WTC11 (cell line): ENCODE measurements at regions of chr5 and their contacts with region 1.

Region 1: DNA sequence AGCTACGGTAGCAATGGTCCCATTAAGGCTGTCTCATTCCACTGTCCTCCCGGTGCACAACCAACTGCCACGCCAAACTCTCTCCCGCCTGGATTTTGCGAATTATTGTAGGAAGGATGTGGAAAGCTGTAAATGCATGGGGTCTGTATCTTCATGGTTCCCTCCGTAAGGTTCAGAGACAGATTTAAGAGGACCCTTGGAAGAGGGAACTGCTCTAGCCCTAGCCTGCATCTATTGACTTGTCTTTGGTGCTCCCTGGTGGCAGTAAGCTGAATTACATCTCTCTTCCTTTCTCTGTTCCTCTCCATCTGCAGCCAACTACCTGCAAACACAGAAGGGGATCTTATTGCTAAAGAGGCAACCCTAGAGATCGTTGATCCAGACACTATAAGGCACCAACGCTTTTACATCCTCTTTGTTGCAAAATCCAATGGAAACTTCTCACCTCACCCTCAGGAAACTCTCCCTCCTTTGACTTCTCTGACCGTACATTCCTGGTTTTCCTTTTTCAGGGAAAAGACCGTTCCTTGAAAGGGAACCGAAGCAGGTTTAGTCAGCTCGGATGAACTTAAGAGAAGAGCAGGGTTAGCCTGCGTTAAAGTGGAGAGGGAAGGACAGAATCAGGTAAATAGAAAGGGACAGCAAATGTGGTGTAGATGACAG is 11.9 kb downstream of the CAPSL start:
- DNase-seq: peak; percentile 58
- ATAC-seq: peak; percentile 85
- H3K4me3 Mint-ChIP-seq: peak overlapping the region; percentile 39
- H3K27ac Mint-ChIP-seq: no peak overlapping the region
- H3K4me1 Mint-ChIP-seq: peaks cover 10% of the 10 kb centered on the region
- H3K27me3 Mint-ChIP-seq: peaks cover 73% of the 10 kb centered on the region
- CTCF ChIP-seq: peak; percentile 93

Region 2: DNA sequence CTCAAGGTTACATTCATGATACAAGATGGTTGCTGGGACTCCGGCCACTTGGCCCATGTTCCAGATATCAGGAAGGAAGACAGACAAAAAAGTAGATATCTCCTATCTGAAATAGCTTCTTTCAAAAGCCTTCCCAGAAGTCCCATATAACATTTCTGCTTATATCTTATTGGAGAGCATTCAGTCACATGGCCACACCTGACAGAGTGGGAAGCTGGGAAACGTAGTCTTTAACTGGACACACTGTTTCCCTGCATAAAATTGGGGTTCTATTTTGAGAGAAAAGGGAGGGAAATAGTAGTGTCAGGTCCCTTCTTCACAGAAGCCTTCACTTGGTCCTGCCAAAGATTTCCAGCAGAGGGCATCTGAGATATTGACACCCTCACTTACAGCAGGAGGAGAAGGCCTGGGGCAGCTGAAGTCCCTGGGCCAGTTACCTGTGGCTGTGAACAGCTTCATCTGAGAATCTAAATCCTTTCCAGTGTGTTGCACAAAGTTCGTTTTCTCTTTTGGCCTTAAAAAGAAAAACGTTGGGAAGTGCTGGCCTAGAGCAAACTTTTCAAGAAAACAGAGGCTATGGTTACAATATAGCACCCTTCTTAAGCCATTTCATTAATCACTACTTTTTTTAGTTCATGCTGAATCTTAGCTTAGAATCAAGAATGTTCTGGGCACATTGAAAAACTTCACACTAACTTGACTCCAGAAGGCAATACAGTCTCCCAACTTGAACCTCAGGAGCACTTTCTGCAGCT is 275.3 kb before region 1 on chr5:
- CTCF ChIA-PET with region 1: interaction called, 52 read pairs
- POLR2A ChIA-PET with region 1: no interaction called
- DNase-seq: peak; percentile 59
- ATAC-seq: peak; percentile 97
- H3K4me3 Mint-ChIP-seq: no peak overlapping the region
- H3K27ac Mint-ChIP-seq: no peak overlapping the region
- H3K4me1 Mint-ChIP-seq: peaks cover 17% of the 10 kb centered on the region
- H3K27me3 Mint-ChIP-seq: no peaks in the 10 kb centered on the region
- CTCF ChIP-seq: 0 out of 2 replicates have a peak, but pooled peaks have one; percentile 17

Region 3: GRCh38 chr5:35753490-35753889 is 173.0 kb before region 1 on chr5:
- CTCF ChIA-PET with region 1: interaction called, 13 read pairs
- POLR2A ChIA-PET with region 1: no interaction called
- DNase-seq: no peak
- ATAC-seq: peak; percentile 57
- H3K4me3 Mint-ChIP-seq: no peak overlapping the region
- H3K27ac Mint-ChIP-seq: no peak overlapping the region
- H3K4me1 Mint-ChIP-seq: peaks cover 22% of the 10 kb centered on the region
- H3K27me3 Mint-ChIP-seq: peaks cover 94% of the 10 kb centered on the region
- CTCF ChIP-seq: no peak

Region 4: DNA sequence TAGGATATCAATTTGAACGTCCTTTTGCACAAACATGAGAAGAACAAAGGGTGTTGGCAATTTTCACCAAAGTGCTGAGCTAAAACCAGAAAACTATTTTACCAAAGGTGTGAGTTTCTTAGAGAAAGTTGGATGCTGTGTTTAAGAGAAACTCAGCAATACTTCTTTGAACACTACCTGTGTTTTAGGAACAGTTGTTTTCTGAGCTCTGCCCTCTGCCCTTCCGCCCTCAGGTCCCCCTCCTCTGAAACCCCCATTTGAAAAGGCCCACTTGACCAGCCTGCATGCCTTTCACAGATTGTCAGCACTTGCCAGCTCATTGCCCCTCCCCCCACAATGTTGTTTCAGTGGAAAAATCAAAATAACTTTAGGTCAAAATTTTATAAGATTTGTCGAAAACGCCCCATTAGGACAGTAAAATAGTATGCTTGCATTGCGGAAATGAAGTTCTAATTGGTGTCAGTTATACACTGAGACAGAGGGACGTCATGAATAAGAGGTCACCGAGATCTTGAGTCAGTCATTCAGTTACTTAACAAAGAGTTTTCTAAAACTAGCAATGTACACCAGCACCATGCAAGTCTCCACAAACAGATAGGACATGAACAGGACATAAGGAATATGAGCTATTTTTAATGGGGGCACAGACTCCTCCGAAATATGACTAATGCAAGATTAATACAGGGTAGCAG is 131.7 kb before region 1 on chr5:
- CTCF ChIA-PET with region 1: interaction called, 13 read pairs
- POLR2A ChIA-PET with region 1: no interaction called
- DNase-seq: no peak
- ATAC-seq: no peak
- H3K4me3 Mint-ChIP-seq: no peak overlapping the region
- H3K27ac Mint-ChIP-seq: no peak overlapping the region
- H3K4me1 Mint-ChIP-seq: peaks cover 20% of the 10 kb centered on the region
- H3K27me3 Mint-ChIP-seq: no peaks in the 10 kb centered on the region; the same call in 1 of the 2 replicates
- CTCF ChIP-seq: no peak

Region 5: GRCh38 chr5:35990941-35991611 is 64.6 kb after region 1 on chr5 and contains the start of gene UGT3A1:
- CTCF ChIA-PET with region 1: interaction called, 15 read pairs
- POLR2A ChIA-PET with region 1: no interaction called
- DNase-seq: peak; percentile 59
- ATAC-seq: peak; percentile 95
- H3K4me3 Mint-ChIP-seq: peak within 1 kb of the TSS; percentile 87
- H3K27ac Mint-ChIP-seq: no peak within 1 kb of the TSS
- H3K4me1 Mint-ChIP-seq: peaks cover 13% of the 10 kb centered on the region
- H3K27me3 Mint-ChIP-seq: peaks cover 39% of the 10 kb centered on the region
- CTCF ChIP-seq: no peak
- total RNA-seq, gene UGT3A1: 2.0 to 2.7 TPM (median 2.1 TPM) in 3 replicates